Gastrocnemius medialis (tissue), 4 donors: ENCODE measurements at regions of chr10 and their contacts with region 1.

Region 1: GRCh38 chr10:3785257-3785850 is 345 bp upstream of the KLF6 start:
- DNase-seq: peak; percentile 99
- ATAC-seq: peak; percentile 55 to 62
- H3K4me3 ChIP-seq: peak overlapping the region; percentile 83 to 94 (median 90)
- H3K27ac ChIP-seq: peak overlapping the region; percentile 97 to 100 (median 100)
- H3K4me1 ChIP-seq: peaks cover 11 to 18% of the 10 kb centered on the region in 2 donors
- H3K27me3 ChIP-seq: no peaks in the 10 kb centered on the region
- CTCF ChIP-seq: peak in 2 of 5 experiments; percentile 14 to 34
- POLR2A ChIP-seq: peak; percentile 100

Region 2: GRCh38 chr10:3435671-3436070 is 349.7 kb before region 1 on chr10:
- in situ Hi-C with region 1: no loop called
- intact Hi-C with region 1: no loop called
- DNase-seq: no peak
- ATAC-seq: no peak
- H3K4me3 ChIP-seq: no peak overlapping the region
- H3K27ac ChIP-seq: no peak overlapping the region
- H3K4me1 ChIP-seq: no peaks in the 10 kb centered on the region
- H3K27me3 ChIP-seq: no peaks in the 10 kb centered on the region
- CTCF ChIP-seq: no peak
- POLR2A ChIP-seq: no peak

Region 3: DNA sequence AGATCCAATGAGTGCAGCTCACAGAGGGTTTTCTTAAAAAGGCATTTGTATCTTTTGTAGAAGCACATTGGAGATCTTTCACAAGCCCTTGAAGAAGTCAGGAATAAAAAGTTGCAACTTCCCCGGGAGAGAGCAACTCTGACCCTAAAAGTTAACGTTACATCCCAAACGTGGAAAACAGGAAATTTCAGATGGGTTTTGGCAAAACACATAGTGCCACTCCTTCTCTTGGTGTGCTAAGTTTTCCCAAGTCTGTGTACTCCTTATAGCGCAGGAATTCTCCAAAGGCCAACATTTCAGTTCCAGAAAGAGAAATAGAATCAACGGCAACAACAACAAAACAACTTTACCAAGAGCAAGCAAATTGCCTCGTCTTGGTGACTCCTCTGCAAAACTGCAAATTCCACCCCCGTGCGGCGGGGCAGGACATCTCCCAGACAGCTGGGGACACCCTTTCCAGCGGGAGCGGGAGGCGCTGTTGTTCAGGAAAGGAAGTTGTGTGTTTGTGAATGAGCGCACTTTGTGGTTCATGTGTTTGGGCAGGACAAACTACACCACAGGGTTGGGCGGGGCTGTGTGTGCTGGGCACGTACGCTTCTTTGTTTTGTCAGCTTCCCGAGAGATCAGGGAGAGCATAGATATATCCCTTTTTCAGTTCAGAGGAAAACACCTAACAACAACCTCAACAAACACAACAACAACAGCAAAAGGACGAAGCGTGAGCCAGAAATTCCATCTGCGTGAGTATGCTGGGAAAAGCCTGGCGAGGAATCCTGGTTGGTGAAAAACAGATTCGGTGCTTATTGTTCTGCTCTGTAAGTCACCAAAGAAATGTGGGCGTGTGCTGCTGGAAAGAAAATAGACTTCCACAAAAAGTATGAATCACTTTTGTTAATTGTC is 318.1 kb before region 1 on chr10:
- in situ Hi-C with region 1: loop called in 1 of 4 experiments (anchors 25 kb)
- intact Hi-C with region 1: loop called (anchors 2 kb)
- DNase-seq: peak; percentile 83 to 86
- ATAC-seq: peak; percentile 67 to 77
- H3K4me3 ChIP-seq: peak overlapping the region; percentile 34 to 41 (median 38)
- H3K27ac ChIP-seq: peak overlapping the region; percentile 86 to 96 (median 92)
- H3K4me1 ChIP-seq: peaks cover 25 to 43% of the 10 kb centered on the region in 2 donors
- H3K27me3 ChIP-seq: no peaks in the 10 kb centered on the region
- CTCF ChIP-seq: peak; percentile 26 to 78 (median 68)
- POLR2A ChIP-seq: peak; percentile 53 to 62

Region 4: GRCh38 chr10:3623746-3624145 is 161.6 kb before region 1 on chr10:
- in situ Hi-C with region 1: no loop called
- intact Hi-C with region 1: no loop called
- DNase-seq: no peak
- ATAC-seq: peak; percentile 61 to 74
- H3K4me3 ChIP-seq: peak overlapping the region in 3 of 4 donors; percentile 7 to 21 (median 9)
- H3K27ac ChIP-seq: peak overlapping the region; percentile 39 to 55 (median 49)
- H3K4me1 ChIP-seq: peaks cover 11 to 22% of the 10 kb centered on the region in 2 donors
- H3K27me3 ChIP-seq: no peaks in the 10 kb centered on the region
- CTCF ChIP-seq: no peak
- POLR2A ChIP-seq: no peak

Region 5: GRCh38 chr10:3749600-3749999 is 35.8 kb before region 1 on chr10:
- in situ Hi-C with region 1: no loop called
- intact Hi-C with region 1: loop called (anchors 2 kb)
- DNase-seq: peak; percentile 82 to 87
- ATAC-seq: peak; percentile 92 to 94
- H3K4me3 ChIP-seq: peak overlapping the region; percentile 13 to 60 (median 42)
- H3K27ac ChIP-seq: peak overlapping the region; percentile 73 to 93 (median 90)
- H3K4me1 ChIP-seq: peaks cover 34 to 41% of the 10 kb centered on the region in 2 donors
- H3K27me3 ChIP-seq: no peaks in the 10 kb centered on the region
- CTCF ChIP-seq: no peak
- POLR2A ChIP-seq: peak; percentile 88

Region 6: DNA sequence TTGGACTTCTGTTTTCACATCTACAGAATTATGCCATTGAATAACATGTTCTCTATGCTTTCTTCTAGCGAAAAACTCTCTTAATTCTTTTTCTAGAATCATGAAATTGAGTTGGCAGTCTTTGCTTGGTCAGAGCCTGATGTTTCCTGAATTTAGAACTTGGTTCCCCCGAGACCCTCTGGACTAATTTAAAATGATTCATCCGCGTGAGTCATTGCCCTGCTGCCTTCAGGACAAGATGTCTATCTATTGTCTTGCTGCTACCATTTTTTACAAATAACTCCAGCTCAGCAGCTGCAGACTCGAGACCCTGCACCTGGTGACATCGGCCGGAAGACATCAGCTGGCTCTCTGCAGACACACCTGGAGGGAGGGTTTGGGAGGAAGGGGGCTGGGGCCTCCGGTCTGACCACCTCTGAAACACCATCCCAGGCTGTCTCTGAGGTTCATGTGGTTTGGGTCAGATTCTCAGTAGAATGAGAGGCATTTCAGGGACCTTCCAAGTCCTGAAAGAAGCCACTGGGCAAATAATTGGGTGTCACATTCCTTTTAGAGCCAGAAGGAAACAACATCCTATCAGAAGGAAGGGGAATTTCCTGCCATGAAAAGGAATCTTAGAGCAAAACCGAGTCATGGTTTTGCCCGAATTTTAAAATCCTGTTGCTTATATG is 20.6 kb after region 1 on chr10:
- in situ Hi-C with region 1: no loop called
- intact Hi-C with region 1: loop called (anchors 1 kb)
- DNase-seq: peak in 1 of 2 donors; percentile 66
- ATAC-seq: peak in 1 of 2 donors; percentile 7
- H3K4me3 ChIP-seq: peak overlapping the region; percentile 5 to 23 (median 12)
- H3K27ac ChIP-seq: peak overlapping the region; percentile 85 to 96 (median 90)
- H3K4me1 ChIP-seq: peaks cover 72 to 78% of the 10 kb centered on the region in 2 donors
- H3K27me3 ChIP-seq: no peaks in the 10 kb centered on the region
- CTCF ChIP-seq: no peak
- POLR2A ChIP-seq: no peak

Region 7: GRCh38 chr10:3828404-3829155 is 43.2 kb after region 1 on chr10:
- in situ Hi-C with region 1: no loop called
- intact Hi-C with region 1: loop called (anchors 1 kb)
- DNase-seq: no peak
- ATAC-seq: no peak
- H3K4me3 ChIP-seq: peak overlapping the region; percentile 50 to 62 (median 58)
- H3K27ac ChIP-seq: peak overlapping the region; percentile 73 to 92 (median 89)
- H3K4me1 ChIP-seq: peaks cover 33 to 36% of the 10 kb centered on the region in 2 donors
- H3K27me3 ChIP-seq: no peaks in the 10 kb centered on the region
- CTCF ChIP-seq: no peak
- POLR2A ChIP-seq: no peak

Region 8: GRCh38 chr10:3902054-3902808 is 116.9 kb after region 1 on chr10:
- in situ Hi-C with region 1: no loop called
- intact Hi-C with region 1: loop called (anchors 5 kb)
- DNase-seq: no peak
- ATAC-seq: peak in 1 of 2 donors; percentile 33
- H3K4me3 ChIP-seq: no peak overlapping the region
- H3K27ac ChIP-seq: no peak overlapping the region
- H3K4me1 ChIP-seq: peaks cover 0 to 3% of the 10 kb centered on the region in 2 donors
- H3K27me3 ChIP-seq: no peaks in the 10 kb centered on the region
- CTCF ChIP-seq: no peak
- POLR2A ChIP-seq: no peak

Region 9: GRCh38 chr10:4767033-4767814 is 981.9 kb after region 1 on chr10:
- in situ Hi-C with region 1: loop called in 1 of 4 experiments (anchors 25 kb)
- intact Hi-C with region 1: loop called (anchors 5 kb)
- DNase-seq: no peak
- ATAC-seq: peak; percentile 74 to 76
- H3K4me3 ChIP-seq: no peak overlapping the region
- H3K27ac ChIP-seq: peak overlapping the region; percentile 27 to 65 (median 56)
- H3K4me1 ChIP-seq: peaks cover 39 to 50% of the 10 kb centered on the region in 2 donors
- H3K27me3 ChIP-seq: no peaks in the 10 kb centered on the region
- CTCF ChIP-seq: peak; percentile 60 to 76 (median 64)
- POLR2A ChIP-seq: no peak